Motor neuron (in vitro differentiated cells): ENCODE measurements at regions of chr5 and their contacts with region 1.

Region 1: GRCh38 chr5:82855893-82856550 is 221.2 kb downstream of the TMEM167A start:
- ATAC-seq: peak in 1 of 8 experiments; percentile 4
- H3K4me3 ChIP-seq: no peak overlapping the region
- H3K27ac ChIP-seq: no peak overlapping the region
- H3K4me1 ChIP-seq: peaks cover 15 to 27% of the 10 kb centered on the region in 2 donors

Region 2: GRCh38 chr5:82754759-82755158 is 101.3 kb before region 1 on chr5:
- in situ Hi-C with region 1: loop called in 1 of 9 experiments (anchors 25 kb)
- ATAC-seq: no peak
- H3K4me3 ChIP-seq: no peak overlapping the region
- H3K27ac ChIP-seq: no peak overlapping the region
- H3K4me1 ChIP-seq: no peaks in the 10 kb centered on the region